ENCODE measurements at regions of chr5 and their contacts with region 1.

Region 1: GRCh38 chr5:177113566-177114424 is 19.8 kb upstream of the NSD1 start:
- DNase-seq: peak; percentile 78
- H3K4me3 ChIP-seq: no peak overlapping the region
- H3K27ac ChIP-seq: no peak overlapping the region
- H3K4me1 ChIP-seq: no peaks in the 10 kb centered on the region
- H3K27me3 ChIP-seq: no peaks in the 10 kb centered on the region
- CTCF ChIP-seq: peak; percentile 96 to 97
- POLR2A ChIP-seq: no peak

Region 2: GRCh38 chr5:176959051-176959450 is 154.7 kb before region 1 on chr5:
- CTCF ChIA-PET with region 1: interaction called, 3 read pairs
- POLR2A ChIA-PET with region 1: no interaction called
- dilution Hi-C with region 1: no loop called
- intact Hi-C with region 1: loop called (anchors 5 kb)
- DNase-seq: peak; percentile 47
- H3K4me3 ChIP-seq: no peak overlapping the region
- H3K27ac ChIP-seq: no peak overlapping the region
- H3K4me1 ChIP-seq: peaks cover 8% of the 10 kb centered on the region
- H3K27me3 ChIP-seq: no peaks in the 10 kb centered on the region
- CTCF ChIP-seq: peak; percentile 23 to 26
- POLR2A ChIP-seq: no peak

Region 3: DNA sequence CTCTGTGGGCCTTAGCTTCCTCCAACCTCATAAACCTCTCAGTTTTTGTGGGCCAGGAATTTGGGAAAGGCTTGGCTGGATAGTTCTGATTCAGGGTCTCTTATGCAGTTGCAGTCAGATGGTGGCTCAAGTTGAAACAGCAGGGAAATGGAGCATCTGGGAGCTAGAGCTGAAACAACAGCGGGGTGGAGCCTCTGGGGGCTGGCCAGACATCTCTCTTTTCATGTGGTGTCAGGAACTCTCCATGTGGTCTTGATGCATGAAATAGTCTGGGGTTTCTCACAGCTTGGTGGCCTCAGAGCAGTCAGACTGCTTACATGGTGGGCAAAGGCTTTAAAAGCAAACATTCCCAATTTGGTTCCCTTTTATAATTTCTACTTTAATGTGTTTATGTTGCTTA is 77.8 kb before region 1 on chr5:
- CTCF ChIA-PET with region 1: no interaction called
- POLR2A ChIA-PET with region 1: no interaction called
- dilution Hi-C with region 1: no loop called
- intact Hi-C with region 1: no loop called
- DNase-seq: no peak
- H3K4me3 ChIP-seq: no peak overlapping the region
- H3K27ac ChIP-seq: no peak overlapping the region
- H3K4me1 ChIP-seq: no peaks in the 10 kb centered on the region
- H3K27me3 ChIP-seq: no peaks in the 10 kb centered on the region
- CTCF ChIP-seq: no peak
- POLR2A ChIP-seq: no peak

Region 4: GRCh38 chr5:177086924-177087706 is 26.7 kb before region 1 on chr5:
- CTCF ChIA-PET with region 1: interaction called, 25 read pairs
- POLR2A ChIA-PET with region 1: no interaction called
- dilution Hi-C with region 1: no loop called
- intact Hi-C with region 1: loop called (anchors 1 kb)
- DNase-seq: peak; percentile 39
- H3K4me3 ChIP-seq: peak overlapping the region in 1 of 3 experiments; percentile 19
- H3K27ac ChIP-seq: no peak overlapping the region
- H3K4me1 ChIP-seq: peaks cover 15% of the 10 kb centered on the region
- H3K27me3 ChIP-seq: peaks cover 3 to 7% of the 10 kb centered on the region in 2 experiments
- CTCF ChIP-seq: peak; percentile 49 to 71
- POLR2A ChIP-seq: no peak

Region 5: DNA sequence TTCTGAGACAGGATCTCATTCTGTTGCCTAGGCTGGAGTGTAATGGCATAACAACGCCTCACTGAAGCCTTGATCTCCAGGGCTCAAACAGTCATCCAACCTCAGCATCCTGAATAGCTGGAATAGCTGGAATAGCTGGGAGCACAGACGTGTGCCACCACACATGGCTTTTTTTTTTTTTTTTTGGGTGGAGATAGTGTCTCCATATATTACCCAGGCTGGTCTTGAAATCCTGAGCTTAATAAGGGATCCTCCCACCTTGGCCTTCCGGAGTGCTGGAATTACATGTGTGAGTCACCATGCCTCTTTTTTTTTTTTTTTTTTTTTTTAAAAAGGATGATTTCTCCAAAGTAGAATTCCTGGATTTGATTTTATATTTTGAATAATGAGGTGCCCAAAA is 80.5 kb after region 1 on chr5:
- CTCF ChIA-PET with region 1: interaction called, 7 read pairs
- POLR2A ChIA-PET with region 1: interaction called, 8 read pairs
- dilution Hi-C with region 1: no loop called
- intact Hi-C with region 1: loop called (anchors 1 kb)
- DNase-seq: peak; percentile 79
- H3K4me3 ChIP-seq: no peak overlapping the region
- H3K27ac ChIP-seq: peak overlapping the region; percentile 90
- H3K4me1 ChIP-seq: peaks cover 24% of the 10 kb centered on the region
- H3K27me3 ChIP-seq: no peaks in the 10 kb centered on the region
- CTCF ChIP-seq: no peak
- POLR2A ChIP-seq: no peak

Region 6: GRCh38 chr5:177311723-177312648 is 198.2 kb after region 1 on chr5 and contains the start of gene MXD3:
- CTCF ChIA-PET with region 1: interaction called, 45 read pairs
- POLR2A ChIA-PET with region 1: no interaction called
- dilution Hi-C with region 1: no loop called
- intact Hi-C with region 1: loop called (anchors 2 kb)
- DNase-seq: peak; percentile 92
- H3K4me3 ChIP-seq: peak within 1 kb of the TSS; percentile 49 to 64 (median 58)
- H3K27ac ChIP-seq: peak within 1 kb of the TSS; percentile 78
- H3K4me1 ChIP-seq: peaks cover 22% of the 10 kb centered on the region
- H3K27me3 ChIP-seq: no peaks in the 10 kb centered on the region
- CTCF ChIP-seq: no peak
- POLR2A ChIP-seq: peak; percentile 63
- total RNA-seq, gene MXD3: 30.5 and 44.2 TPM in 2 replicates

Region 7: GRCh38 chr5:177403792-177404640 is 290.2 kb after region 1 on chr5:
- CTCF ChIA-PET with region 1: interaction called, 18 read pairs
- POLR2A ChIA-PET with region 1: no interaction called
- dilution Hi-C with region 1: no loop called
- intact Hi-C with region 1: no loop called
- DNase-seq: peak; percentile 73
- H3K4me3 ChIP-seq: peak overlapping the region; percentile 27 to 42 (median 34)
- H3K27ac ChIP-seq: no peak overlapping the region
- H3K4me1 ChIP-seq: peaks cover 23% of the 10 kb centered on the region
- H3K27me3 ChIP-seq: peaks cover 34 to 39% of the 10 kb centered on the region in 2 experiments
- CTCF ChIP-seq: peak; percentile 81 to 87
- POLR2A ChIP-seq: peak; percentile 41